IMR-90 (cell line): ENCODE measurements at regions of chr10 and their contacts with region 1.

Region 1: GRCh38 chr10:69318106-69318866 is 40.0 kb downstream of the HK1 start:
- DNase-seq: peak; percentile 77
- ATAC-seq: peak; percentile 92
- H3K4me3 ChIP-seq: peak overlapping the region; percentile 90
- H3K27ac ChIP-seq: peak overlapping the region; percentile 41
- H3K4me1 ChIP-seq: peaks cover 30% of the 10 kb centered on the region
- H3K27me3 ChIP-seq: no peaks in the 10 kb centered on the region
- CTCF ChIP-seq: no peak
- POLR2A ChIP-seq: 0 out of 2 replicates have a peak, but pooled peaks have one; percentile 8
- RAD21 ChIP-seq: no peak

Region 2: DNA sequence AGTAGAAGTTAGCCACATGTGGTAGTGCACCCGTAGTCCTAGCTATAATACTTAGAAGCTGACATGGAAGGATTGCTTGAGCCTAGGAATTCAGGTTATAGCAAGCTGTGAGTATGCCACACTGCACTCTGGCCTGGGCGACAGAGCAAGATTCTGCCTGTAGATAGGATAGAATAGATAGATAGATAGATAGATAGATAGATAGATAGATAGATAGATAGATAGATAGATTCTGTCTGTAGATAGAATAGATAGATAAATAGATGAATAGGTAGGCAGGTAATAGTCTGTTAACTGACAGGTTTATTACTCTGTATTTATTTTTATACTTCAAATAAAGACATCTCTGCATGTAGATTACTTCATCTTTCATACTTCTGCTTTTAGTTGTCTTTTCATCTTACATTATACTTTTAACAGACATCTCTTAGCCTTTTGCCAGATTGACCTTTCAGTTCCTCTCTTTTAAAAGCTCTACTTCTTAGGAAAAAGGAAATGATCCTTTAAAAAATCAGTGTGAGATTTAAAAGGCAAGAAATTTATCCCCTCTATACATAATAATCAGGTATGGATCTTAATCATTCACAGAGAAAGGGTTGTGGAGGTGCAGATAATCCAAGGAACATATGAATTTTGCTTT is 565.5 kb before region 1 on chr10:
- CTCF ChIA-PET with region 1: no interaction called
- POLR2A ChIA-PET with region 1: no interaction called
- dilution Hi-C with region 1: no loop called
- in situ Hi-C with region 1: no loop called
- intact Hi-C with region 1: no loop called
- DNase-seq: no peak
- ATAC-seq: no peak
- H3K4me3 ChIP-seq: no peak overlapping the region
- H3K27ac ChIP-seq: no peak overlapping the region
- H3K4me1 ChIP-seq: no peaks in the 10 kb centered on the region
- H3K27me3 ChIP-seq: no peaks in the 10 kb centered on the region
- CTCF ChIP-seq: no peak
- POLR2A ChIP-seq: no peak
- RAD21 ChIP-seq: no peak

Region 3: DNA sequence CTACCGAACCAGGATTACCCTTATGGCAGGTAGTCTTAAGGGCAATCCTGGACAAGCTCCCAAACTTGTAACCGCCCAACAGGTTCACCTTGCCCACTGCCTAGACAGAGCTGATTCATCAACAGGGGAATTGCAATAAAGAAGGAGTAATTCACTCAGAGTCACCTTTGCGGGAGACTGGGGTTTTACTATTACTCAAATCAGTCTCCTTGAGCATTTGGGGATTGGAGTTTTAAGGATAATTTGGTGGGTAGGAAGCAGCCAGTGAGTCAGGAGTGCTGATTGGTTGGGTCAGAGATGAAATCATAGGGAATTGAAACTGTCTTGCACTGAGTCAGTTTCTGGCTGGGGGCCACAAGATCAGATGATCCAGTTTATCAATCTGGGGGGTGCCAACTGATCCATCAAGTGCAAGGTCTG is 14.6 kb before region 1 on chr10:
- CTCF ChIA-PET with region 1: no interaction called
- POLR2A ChIA-PET with region 1: no interaction called
- dilution Hi-C with region 1: no loop called
- in situ Hi-C with region 1: no loop called
- intact Hi-C with region 1: no loop called
- DNase-seq: peak; percentile 44
- ATAC-seq: no peak
- H3K4me3 ChIP-seq: no peak overlapping the region
- H3K27ac ChIP-seq: no peak overlapping the region
- H3K4me1 ChIP-seq: no peaks in the 10 kb centered on the region
- H3K27me3 ChIP-seq: peaks cover 17% of the 10 kb centered on the region
- CTCF ChIP-seq: no peak
- POLR2A ChIP-seq: no peak
- RAD21 ChIP-seq: no peak

Region 4: DNA sequence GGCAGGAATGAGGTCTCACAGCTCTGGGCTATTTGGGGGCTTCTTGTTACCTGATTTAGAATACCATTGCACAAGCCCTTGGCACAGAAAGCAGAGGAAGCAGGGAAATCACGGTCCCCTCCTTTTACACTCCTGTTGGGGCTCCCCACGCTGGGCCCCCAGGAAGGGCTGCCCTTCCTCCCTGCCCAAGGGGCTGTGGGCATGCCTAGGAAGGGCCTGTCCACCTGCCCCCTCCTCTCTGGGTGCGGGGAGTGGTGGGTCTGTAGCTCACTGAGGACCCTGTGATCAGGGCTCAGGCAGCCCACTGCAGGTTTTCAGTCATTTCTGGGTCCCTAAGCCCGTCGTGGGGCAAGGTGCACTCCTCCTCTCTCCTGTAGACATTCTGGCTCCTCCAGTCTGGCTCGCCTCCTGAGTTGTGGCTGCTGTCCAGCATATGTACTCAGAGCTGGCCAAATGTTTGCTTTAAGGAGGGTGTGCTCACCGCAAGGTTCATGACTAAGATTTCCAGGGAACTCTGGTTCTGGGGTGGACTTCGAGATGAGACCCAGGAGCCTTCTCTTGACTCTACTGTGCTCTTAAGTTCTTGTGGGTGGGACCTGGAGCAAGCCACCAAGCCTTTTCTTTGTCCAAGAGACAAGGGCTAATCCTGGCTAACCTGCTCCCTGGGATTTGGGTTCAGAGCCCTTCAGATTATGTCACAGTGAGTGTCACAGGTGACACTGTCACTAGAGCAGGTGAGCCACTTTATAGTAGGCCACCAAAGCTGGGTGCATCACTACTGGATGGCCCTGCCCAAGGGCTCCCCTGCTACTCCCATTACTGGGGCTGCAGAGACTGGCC is 42.4 kb after region 1 on chr10:
- CTCF ChIA-PET with region 1: no interaction called
- POLR2A ChIA-PET with region 1: no interaction called
- dilution Hi-C with region 1: no loop called
- in situ Hi-C with region 1: no loop called
- intact Hi-C with region 1: loop called (anchors 5 kb)
- DNase-seq: peak; percentile 93
- ATAC-seq: peak; percentile 78
- H3K4me3 ChIP-seq: no peak overlapping the region
- H3K27ac ChIP-seq: no peak overlapping the region
- H3K4me1 ChIP-seq: peaks cover 30% of the 10 kb centered on the region
- H3K27me3 ChIP-seq: no peaks in the 10 kb centered on the region
- CTCF ChIP-seq: no peak
- POLR2A ChIP-seq: no peak
- RAD21 ChIP-seq: no peak

Region 5: DNA sequence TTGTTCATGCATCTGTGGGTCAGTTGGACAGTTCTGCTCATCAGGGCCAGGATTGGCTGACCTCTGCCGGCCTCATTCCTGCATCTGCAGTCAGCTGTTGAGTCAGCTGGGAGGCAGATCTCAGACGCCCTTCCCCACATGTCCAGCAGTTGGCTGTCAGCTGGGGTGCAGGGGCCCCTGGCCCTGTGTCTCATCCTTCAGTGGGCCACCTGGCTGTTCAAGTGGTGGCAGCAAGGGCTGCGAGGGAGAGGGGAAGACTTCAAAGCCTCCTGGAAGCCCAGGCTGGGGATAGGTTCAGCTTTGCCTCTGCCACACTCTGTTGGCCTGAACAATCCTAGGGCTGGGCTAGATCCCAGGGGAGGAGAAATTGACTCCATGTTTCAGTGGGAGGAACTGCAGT is 65.3 kb after region 1 on chr10:
- CTCF ChIA-PET with region 1: no interaction called
- POLR2A ChIA-PET with region 1: no interaction called
- dilution Hi-C with region 1: no loop called
- in situ Hi-C with region 1: no loop called
- intact Hi-C with region 1: loop called (anchors 1 kb)
- DNase-seq: peak; percentile 84
- ATAC-seq: peak; percentile 95
- H3K4me3 ChIP-seq: no peak overlapping the region
- H3K27ac ChIP-seq: no peak overlapping the region
- H3K4me1 ChIP-seq: peaks cover 7% of the 10 kb centered on the region
- H3K27me3 ChIP-seq: no peaks in the 10 kb centered on the region
- CTCF ChIP-seq: peak; percentile 40
- POLR2A ChIP-seq: no peak
- RAD21 ChIP-seq: peak; percentile 49

Region 6: DNA sequence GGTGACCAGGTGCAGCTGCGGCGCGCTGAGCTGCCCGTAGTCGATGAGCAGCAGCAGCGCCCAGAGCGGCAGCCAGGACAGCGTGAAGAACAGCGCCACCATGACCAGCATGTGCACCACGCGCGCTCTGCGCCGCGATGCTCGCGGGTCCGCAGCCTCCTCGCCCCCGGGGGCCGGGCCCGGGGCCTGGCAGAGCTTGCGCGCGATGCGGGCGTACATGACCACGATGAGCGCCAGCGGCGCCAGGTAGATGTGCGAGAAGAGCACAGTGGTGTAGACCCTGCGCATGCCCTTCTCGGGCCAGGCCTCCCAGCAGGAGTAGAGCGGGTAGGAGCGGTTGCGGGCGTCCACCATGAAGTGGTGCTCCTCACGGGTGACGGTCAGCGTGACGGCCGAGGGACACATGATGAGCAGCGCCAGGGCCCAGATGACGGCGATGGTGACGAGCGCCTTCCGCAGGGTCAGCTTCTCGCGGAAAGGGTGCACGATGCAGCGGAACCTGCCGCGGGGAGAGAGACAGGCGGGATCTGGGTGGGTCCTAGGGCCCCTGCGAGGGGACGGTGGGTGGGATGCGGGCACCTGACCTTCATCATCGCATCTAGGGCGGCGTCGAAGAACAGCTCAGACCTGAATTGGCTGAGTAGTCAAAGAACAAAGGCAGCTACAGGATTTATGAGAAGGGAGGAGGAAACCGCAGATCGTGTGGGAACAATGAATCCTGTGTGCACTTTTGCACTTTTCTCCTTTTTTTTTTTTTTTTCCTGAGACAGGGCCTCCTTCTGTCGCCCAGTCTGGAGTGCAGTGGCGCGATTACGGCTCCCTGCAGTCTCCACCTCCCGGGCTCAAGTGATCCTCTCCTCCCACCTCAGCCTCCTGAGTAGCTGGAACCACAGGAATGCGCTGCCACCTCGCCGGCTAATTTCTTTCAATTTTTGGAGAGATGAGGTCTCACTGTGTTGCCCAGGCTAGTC is 937.3 kb after region 1 on chr10:
- CTCF ChIA-PET with region 1: no interaction called
- POLR2A ChIA-PET with region 1: no interaction called
- dilution Hi-C with region 1: no loop called
- in situ Hi-C with region 1: no loop called
- intact Hi-C with region 1: no loop called
- DNase-seq: no peak
- ATAC-seq: no peak
- H3K4me3 ChIP-seq: no peak overlapping the region
- H3K27ac ChIP-seq: no peak overlapping the region
- H3K4me1 ChIP-seq: peaks cover 1% of the 10 kb centered on the region; the same call in 1 of the 2 replicates
- H3K27me3 ChIP-seq: peaks cover 24% of the 10 kb centered on the region
- CTCF ChIP-seq: no peak
- POLR2A ChIP-seq: no peak
- RAD21 ChIP-seq: no peak